Activated naive CD4-positive, alpha-beta T cell treated with anti-CD3 and anti-CD28 coated beads, Interleukin-2, amount 10 ng/mL, durations not matched to agents 7 days and 5 days (primary cell): ENCODE measurements at regions of chr22 and their contacts with region 1.

Region 1: DNA sequence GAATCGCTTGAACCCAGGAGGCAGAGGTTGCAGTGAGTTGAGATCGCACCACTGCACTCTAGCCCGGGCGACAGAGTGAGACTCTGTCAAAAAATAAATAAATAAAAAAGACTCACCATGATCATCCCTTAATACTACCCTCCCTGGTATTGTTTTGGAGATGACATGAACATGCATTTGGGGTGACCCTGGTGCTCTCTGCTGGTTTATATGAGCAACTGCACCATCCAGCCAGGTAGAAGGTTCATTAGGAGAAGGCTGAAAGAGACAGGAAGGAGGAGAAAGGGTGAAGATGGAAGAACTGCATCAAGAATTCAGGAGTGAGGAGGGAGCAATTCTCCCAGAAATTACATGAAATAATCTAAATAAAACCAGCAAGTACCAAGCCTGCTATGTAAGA is 37.8 kb downstream of the SLC5A1 start:
- DNase-seq: peak; percentile 38
- H3K4me3 Mint-ChIP-seq: no peak overlapping the region
- H3K27ac Mint-ChIP-seq: no peak overlapping the region
- H3K4me1 Mint-ChIP-seq: peaks cover 4% of the 10 kb centered on the region
- H3K27me3 Mint-ChIP-seq: peaks cover 27% of the 10 kb centered on the region

Region 2: GRCh38 chr22:31977141-31977841 is 103.6 kb before region 1 on chr22:
- CTCF ChIA-PET with region 1: interaction called, 35 read pairs
- DNase-seq: peak; percentile 88
- H3K4me3 Mint-ChIP-seq: no peak overlapping the region
- H3K27ac Mint-ChIP-seq: no peak overlapping the region
- H3K4me1 Mint-ChIP-seq: peaks cover 5% of the 10 kb centered on the region
- H3K27me3 Mint-ChIP-seq: peaks cover 17% of the 10 kb centered on the region